Activated CD4-positive, alpha-beta T cell treated with anti-CD3 and anti-CD28 coated beads for 36 hours (primary cell): ENCODE measurements at regions of chr11 and their contacts with region 1.

Region 1: DNA sequence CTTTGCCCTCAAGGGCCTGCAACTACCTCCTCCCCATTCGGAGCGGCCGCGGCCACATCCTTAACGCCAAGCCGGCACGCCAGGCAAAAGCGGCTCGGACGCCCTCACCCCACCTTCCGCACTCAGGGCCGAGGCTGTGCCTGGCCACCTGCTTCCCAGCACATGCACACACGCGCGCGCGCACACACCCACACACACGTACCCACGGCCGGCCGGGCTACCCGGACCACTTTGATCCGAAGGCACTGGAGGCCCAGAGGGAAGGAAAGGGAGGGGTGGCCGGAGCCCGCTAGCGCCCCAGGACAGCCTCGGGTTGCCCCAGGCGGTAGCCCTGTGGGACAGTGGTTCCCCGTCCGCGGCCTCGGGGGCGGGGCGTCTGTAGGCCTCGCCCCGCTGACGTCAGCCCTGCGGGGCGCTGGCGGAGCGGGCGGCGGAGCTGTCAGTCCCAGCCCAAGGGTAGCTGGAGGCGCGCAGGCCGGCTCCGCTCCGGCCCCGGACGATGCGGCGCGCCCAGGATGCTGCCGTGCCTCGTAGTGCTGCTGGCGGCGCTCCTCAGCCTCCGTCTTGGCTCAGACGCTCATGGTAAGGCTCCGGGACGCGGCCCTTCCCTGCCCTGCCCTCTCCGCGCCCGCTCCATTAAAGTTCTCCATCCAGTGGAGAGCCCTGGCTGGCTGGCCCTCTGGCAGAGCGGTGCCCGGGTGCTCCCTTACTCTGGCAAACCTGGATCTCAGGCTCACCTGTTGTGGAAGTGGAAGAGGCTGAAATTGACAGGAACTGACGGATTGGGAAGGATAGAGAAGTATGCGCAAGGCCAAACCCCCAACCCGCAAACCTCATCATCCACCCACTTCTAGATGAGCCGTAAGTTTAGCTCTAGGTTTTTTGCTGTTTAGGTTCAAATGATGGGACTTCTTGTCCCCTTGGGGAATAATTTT is at the start of gene IL10RA:
- DNase-seq: peak; percentile 90
- ATAC-seq: peak; percentile 80
- H3K4me3 Mint-ChIP-seq: peak within 1 kb of the TSS; percentile 96
- H3K27ac Mint-ChIP-seq: peak within 1 kb of the TSS; percentile 96
- H3K4me1 Mint-ChIP-seq: peaks cover 76% of the 10 kb centered on the region
- H3K27me3 Mint-ChIP-seq: no peaks in the 10 kb centered on the region
- total RNA-seq, gene IL10RA: 57.1 to 79.4 TPM

Region 2: GRCh38 chr11:117704395-117705100 is 281.7 kb before region 1 on chr11:
- CTCF ChIA-PET with region 1: no interaction called
- POLR2A ChIA-PET with region 1: no interaction called
- intact Hi-C with region 1: no loop called
- DNase-seq: no peak
- ATAC-seq: no peak
- H3K4me3 Mint-ChIP-seq: no peak overlapping the region
- H3K27ac Mint-ChIP-seq: no peak overlapping the region
- H3K4me1 Mint-ChIP-seq: peaks cover 2% of the 10 kb centered on the region
- H3K27me3 Mint-ChIP-seq: peaks cover 12% of the 10 kb centered on the region

Region 3: GRCh38 chr11:117817368-117818040 is 168.7 kb before region 1 on chr11:
- CTCF ChIA-PET with region 1: interaction called, 3 read pairs
- POLR2A ChIA-PET with region 1: interaction called, 3 read pairs
- intact Hi-C with region 1: loop called in 1 of 2 experiments (anchors 1 kb)
- DNase-seq: peak; percentile 95
- ATAC-seq: peak; percentile 45
- H3K4me3 Mint-ChIP-seq: peak overlapping the region; percentile 49
- H3K27ac Mint-ChIP-seq: peak overlapping the region; percentile 99
- H3K4me1 Mint-ChIP-seq: peaks cover 59% of the 10 kb centered on the region
- H3K27me3 Mint-ChIP-seq: no peaks in the 10 kb centered on the region

Region 4: DNA sequence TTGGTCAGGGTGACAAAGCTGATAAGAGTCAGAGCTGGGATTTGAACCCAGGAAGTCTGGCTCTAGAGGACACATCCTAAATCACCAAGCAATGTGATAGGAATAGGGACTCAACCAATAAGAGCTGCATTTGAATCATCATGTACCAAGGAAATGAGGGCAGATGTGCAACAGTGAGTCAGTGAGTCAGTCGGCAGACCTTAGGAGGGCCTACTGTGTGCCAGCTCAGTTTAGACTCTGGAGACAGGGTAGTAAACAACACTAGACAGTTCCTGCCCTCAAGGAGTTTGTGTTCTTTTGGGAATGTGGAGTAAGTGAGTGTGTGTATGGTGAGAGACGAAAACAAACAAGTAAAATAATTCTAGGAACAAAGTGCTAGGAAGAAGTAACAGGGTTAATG is 11.2 kb after region 1 on chr11:
- CTCF ChIA-PET with region 1: interaction called, 31 read pairs
- POLR2A ChIA-PET with region 1: interaction called, 78 read pairs
- intact Hi-C with region 1: loop called (anchors 1 kb)
- DNase-seq: peak; percentile 46
- ATAC-seq: no peak
- H3K4me3 Mint-ChIP-seq: no peak overlapping the region
- H3K27ac Mint-ChIP-seq: peak overlapping the region; percentile 79
- H3K4me1 Mint-ChIP-seq: peaks cover 87% of the 10 kb centered on the region
- H3K27me3 Mint-ChIP-seq: no peaks in the 10 kb centered on the region

Region 5: GRCh38 chr11:118046051-118046963 is 60.1 kb after region 1 on chr11:
- CTCF ChIA-PET with region 1: interaction called, 43 read pairs
- POLR2A ChIA-PET with region 1: interaction called, 23 read pairs
- intact Hi-C with region 1: loop called (anchors 1 kb)
- DNase-seq: peak; percentile 49
- ATAC-seq: peak; percentile 76
- H3K4me3 Mint-ChIP-seq: peak overlapping the region; percentile 25
- H3K27ac Mint-ChIP-seq: peak overlapping the region; percentile 76
- H3K4me1 Mint-ChIP-seq: peaks cover 88% of the 10 kb centered on the region
- H3K27me3 Mint-ChIP-seq: no peaks in the 10 kb centered on the region

Region 6: DNA sequence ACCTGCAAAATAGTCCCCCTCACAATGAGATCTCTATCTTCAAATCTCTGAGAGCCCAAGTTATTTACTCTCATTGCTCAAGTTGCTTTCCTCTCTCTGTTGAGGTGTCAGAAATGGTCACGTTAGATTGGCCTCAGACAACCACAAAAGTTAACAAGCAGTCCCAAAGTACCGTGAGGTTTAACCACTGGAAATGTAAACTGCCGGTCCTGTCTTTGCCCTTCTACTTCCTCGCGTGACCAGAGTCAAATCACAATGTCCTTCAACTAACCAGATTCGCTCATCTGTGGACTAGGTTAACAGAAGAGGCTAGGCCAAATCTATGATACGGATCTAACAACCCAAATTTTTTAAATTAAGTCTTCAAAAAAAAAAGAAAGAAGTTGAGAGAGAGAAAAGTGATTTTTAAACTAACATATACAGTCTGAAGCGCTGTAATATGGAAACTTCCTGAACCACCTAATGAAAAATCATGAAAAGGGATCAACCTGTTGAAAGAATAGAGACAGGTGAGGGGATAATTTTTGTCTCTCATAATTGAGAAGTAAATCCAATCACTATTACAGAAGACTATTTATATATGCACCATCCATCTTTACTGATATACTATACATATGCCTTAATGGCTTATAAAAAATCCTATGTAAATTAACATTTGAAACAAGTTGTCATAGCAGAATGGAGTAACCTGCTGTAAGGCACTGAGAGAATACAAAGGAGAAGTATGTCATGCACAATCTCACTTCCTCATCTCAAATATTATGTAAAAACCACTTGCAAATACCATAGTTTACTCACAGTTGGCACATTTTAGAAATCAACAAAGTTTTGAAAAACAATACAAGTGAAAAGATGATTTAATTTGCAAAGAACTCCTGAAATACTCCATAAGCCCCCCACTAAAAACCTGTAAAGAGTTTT is 241.9 kb after region 1 on chr11:
- CTCF ChIA-PET with region 1: no interaction called
- POLR2A ChIA-PET with region 1: no interaction called
- intact Hi-C with region 1: loop called in 1 of 2 experiments (anchors 2 kb)
- DNase-seq: no peak
- ATAC-seq: no peak
- H3K4me3 Mint-ChIP-seq: peak overlapping the region; percentile 15
- H3K27ac Mint-ChIP-seq: no peak overlapping the region
- H3K4me1 Mint-ChIP-seq: peaks cover 49% of the 10 kb centered on the region
- H3K27me3 Mint-ChIP-seq: no peaks in the 10 kb centered on the region

Region 7: DNA sequence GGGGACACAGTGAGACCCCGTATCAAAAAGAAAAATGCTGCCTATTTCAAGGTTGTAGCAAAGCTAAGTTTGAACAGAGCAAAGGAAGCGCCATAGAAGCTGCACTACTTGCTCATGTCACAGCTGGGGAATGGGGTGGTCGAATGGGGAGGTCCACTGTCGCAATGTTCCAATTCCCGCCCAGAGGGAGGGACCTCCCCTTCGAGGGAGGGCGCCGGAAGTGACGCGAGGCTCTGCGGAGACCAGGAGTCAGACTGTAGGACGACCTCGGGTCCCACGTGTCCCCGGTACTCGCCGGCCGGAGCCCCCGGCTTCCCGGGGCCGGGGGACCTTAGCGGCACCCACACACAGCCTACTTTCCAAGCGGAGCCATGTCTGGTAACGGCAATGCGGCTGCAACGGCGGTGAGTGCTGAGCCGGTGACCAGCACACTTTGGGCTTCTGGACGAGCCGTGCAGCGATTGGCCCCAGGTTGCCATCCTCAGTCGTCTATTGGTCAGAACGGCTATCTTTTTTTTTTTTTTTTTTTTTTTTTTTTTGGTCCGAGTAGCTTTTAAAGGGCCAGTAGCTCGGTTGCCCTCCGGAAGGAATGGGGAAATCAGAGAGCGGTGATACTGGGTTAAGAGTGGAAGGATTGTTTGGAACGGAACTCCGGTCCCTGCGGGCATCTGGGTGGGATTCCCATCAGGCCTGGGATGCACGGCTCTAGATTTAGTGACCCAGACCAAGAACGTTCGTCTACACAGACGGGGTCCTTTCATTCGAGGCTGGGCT is 1098.6 kb after region 1 on chr11 and contains the start of gene HMBS:
- CTCF ChIA-PET with region 1: no interaction called
- POLR2A ChIA-PET with region 1: no interaction called
- intact Hi-C with region 1: no loop called
- DNase-seq: peak; percentile 96
- ATAC-seq: peak; percentile 94
- H3K4me3 Mint-ChIP-seq: peak within 1 kb of the TSS; percentile 97
- H3K27ac Mint-ChIP-seq: peak within 1 kb of the TSS; percentile 92
- H3K4me1 Mint-ChIP-seq: peaks cover 22% of the 10 kb centered on the region
- H3K27me3 Mint-ChIP-seq: no peaks in the 10 kb centered on the region
- total RNA-seq, gene HMBS: 39.8 to 41.8 TPM